ENCODE measurements at regions of chr14 and their contacts with region 1.

Region 1: GRCh38 chr14:69501423-69501838 is 16.9 kb downstream of the PLEKHD1 start:
- DNase-seq: no peak
- H3K4me3 Mint-ChIP-seq: no peak overlapping the region
- H3K27ac Mint-ChIP-seq: no peak overlapping the region
- H3K4me1 Mint-ChIP-seq: no peaks in the 10 kb centered on the region
- H3K27me3 Mint-ChIP-seq: peaks cover 2% of the 10 kb centered on the region

Region 2: GRCh38 chr14:69483765-69484443 is 17.5 kb before region 1 on chr14:
- intact Hi-C with region 1: no loop called
- DNase-seq: no peak
- H3K4me3 Mint-ChIP-seq: no peak overlapping the region
- H3K27ac Mint-ChIP-seq: no peak overlapping the region
- H3K4me1 Mint-ChIP-seq: no peaks in the 10 kb centered on the region
- H3K27me3 Mint-ChIP-seq: peaks cover 58% of the 10 kb centered on the region

Region 3: GRCh38 chr14:69536971-69537370 is 35.5 kb after region 1 on chr14:
- intact Hi-C with region 1: loop called (anchors 1 kb)
- DNase-seq: peak; percentile 12
- H3K4me3 Mint-ChIP-seq: no peak overlapping the region
- H3K27ac Mint-ChIP-seq: no peak overlapping the region
- H3K4me1 Mint-ChIP-seq: peaks cover 1% of the 10 kb centered on the region
- H3K27me3 Mint-ChIP-seq: peaks cover 38% of the 10 kb centered on the region

Measured in activated CD4-positive, alpha-beta T cell treated with anti-CD3 and anti-CD28 coated beads, Interleukin-2, amount 10 ng/mL, durations not matched to agents 24 days and 14 days (primary cell).